ENCODE measurements at regions of chr7 and their contacts with region 1.

Region 1: DNA sequence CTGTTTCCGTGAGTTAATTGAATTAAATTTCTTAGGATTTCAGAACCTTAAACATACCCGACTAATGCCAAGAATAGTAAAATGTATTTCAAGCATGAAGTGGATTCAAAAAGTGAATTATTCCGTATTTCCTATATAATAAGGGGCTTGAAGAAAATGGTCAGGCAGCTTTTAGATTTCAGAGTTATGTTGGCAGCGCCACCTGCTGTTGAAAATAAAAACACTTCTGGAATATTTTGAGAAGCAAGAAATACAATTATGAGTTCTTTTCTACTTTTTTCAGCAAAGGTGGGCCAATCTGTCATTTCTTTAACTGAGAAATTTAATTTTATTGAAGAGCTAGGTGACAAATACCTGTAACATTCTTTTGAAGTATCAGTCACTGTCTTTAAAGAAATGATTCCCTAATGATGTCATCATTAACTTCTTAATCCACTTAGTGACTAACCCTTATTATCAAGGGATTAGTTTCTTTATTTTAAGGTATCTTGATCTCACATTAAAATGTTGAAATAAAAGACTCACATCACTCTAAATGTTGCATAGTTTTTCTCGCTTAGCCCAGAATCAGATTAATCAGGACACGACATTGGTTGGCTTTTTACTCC is 36.6 kb upstream of the AGR3 start:
- DNase-seq: peak; percentile 63
- H3K4me3 ChIP-seq: no peak overlapping the region
- H3K27ac ChIP-seq: no peak overlapping the region
- H3K4me1 ChIP-seq: peaks cover 7% of the 10 kb centered on the region
- H3K27me3 ChIP-seq: no peaks in the 10 kb centered on the region
- CTCF ChIP-seq: peak; percentile 63

Region 2: GRCh38 chr7:16695621-16696237 is 222.7 kb before region 1 on chr7:
- intact Hi-C with region 1: loop called (anchors 5 kb)
- DNase-seq: peak; percentile 55
- H3K4me3 ChIP-seq: no peak overlapping the region
- H3K27ac ChIP-seq: no peak overlapping the region
- H3K4me1 ChIP-seq: no peaks in the 10 kb centered on the region
- H3K27me3 ChIP-seq: no peaks in the 10 kb centered on the region
- CTCF ChIP-seq: peak; percentile 70

Region 3: DNA sequence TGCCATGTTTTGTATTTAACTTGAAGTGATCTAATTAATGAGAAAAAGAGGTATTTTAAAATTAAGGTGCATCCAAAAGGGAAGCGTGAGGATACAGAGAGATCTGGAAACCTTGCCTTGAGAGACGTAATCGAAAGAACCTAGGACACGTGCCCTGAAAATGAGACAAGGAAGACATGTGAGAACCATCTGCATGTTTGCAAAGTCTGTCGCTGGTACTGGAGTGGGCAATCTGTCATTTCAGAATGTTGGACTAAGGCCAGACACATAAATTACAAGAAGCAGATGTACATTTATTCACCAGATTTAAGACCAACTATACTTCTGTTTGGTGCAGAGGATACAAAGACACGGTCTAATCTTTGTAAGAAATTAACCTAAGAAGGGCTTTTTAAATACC is 122.8 kb before region 1 on chr7:
- intact Hi-C with region 1: loop called (anchors 5 kb)
- DNase-seq: no peak
- H3K4me3 ChIP-seq: no peak overlapping the region
- H3K27ac ChIP-seq: no peak overlapping the region
- H3K4me1 ChIP-seq: no peaks in the 10 kb centered on the region
- H3K27me3 ChIP-seq: no peaks in the 10 kb centered on the region
- CTCF ChIP-seq: no peak

Region 4: GRCh38 chr7:16891338-16891737 is 27.1 kb before region 1 on chr7:
- intact Hi-C with region 1: loop called (anchors 2 kb)
- DNase-seq: peak; percentile 58
- H3K4me3 ChIP-seq: no peak overlapping the region
- H3K27ac ChIP-seq: no peak overlapping the region
- H3K4me1 ChIP-seq: no peaks in the 10 kb centered on the region
- H3K27me3 ChIP-seq: no peaks in the 10 kb centered on the region
- CTCF ChIP-seq: peak; percentile 45

Region 5: DNA sequence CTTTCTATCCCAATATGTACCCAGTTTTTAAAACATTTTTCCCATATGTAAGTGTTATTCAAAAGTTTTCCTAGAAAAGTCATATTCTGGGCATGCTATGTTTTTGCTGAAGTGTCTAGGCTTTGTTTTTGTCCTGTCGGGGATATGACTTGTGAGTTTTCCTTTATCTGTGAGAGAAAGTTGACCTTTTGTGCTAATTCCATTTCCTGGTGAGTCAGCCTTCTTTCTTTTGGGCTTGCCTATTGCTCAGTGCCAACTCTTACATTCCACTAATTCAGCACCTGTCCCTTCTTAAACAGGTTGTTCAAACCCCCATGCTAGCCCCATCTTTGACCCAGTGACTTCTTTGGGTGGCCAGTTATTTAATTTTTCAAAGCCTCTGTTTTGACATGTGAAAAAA is 526.3 kb after region 1 on chr7:
- intact Hi-C with region 1: no loop called
- DNase-seq: no peak
- H3K4me3 ChIP-seq: no peak overlapping the region
- H3K27ac ChIP-seq: peak overlapping the region; percentile 25
- H3K4me1 ChIP-seq: no peaks in the 10 kb centered on the region
- H3K27me3 ChIP-seq: no peaks in the 10 kb centered on the region
- CTCF ChIP-seq: no peak

Measured in colonic mucosa (tissue), 4 donors.